Left ventricle myocardium inferior (tissue), 1 donor: ENCODE measurements at regions of chr5 and their contacts with region 1.

Region 1: DNA sequence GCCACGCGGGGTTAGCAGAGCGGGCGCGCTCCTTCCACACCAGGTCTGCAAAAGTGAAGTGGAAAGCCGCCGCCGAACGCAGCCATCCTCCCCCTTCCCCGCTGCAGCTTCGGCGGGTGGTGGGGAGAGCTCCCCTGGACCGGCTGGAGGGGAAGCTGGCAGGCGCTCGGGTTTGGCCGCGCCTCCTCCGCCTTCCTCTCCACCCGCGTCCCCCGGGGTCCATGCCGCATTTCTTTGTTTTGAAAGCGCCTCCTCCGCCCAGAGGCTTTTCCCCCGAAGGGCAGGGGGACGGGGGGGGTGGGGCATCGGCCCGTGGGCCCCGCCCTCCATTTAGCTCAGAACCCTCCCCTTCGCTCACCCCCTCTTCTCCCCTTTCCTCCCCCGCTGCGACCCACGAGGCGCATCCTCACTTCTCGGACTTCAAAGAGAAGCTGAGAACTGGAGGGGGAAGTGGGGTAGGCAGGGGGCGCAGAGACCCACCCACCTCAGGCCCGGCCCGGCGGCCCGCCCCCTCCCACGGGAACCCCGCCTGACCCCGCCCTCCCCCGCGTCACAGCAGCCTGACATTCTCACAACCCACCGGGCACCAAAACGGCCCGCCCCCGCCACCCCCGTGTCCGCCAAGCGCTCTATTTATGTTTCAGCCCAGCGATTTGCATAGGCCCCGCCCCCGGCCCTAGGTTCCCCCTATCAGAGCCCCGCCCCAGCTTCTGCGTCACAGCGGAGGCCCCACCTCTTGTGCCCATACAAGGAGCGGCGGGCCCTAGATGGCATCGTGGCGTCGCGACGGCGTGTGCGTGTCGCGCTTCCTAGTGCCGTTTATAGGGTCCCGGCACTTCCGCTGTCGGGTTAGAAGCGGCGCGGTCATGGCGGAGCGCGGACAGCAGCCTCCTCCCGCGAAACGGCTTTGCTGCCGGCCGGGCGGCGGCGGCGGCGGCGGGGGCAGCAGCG is at the start of gene ZSWIM6:
- DNase-seq: peak; percentile 100
- H3K4me3 ChIP-seq: peak within 1 kb of the TSS; percentile 98
- H3K27ac ChIP-seq: peak within 1 kb of the TSS; percentile 96
- H3K4me1 ChIP-seq: peaks cover 54% of the 10 kb centered on the region
- H3K27me3 ChIP-seq: no peaks in the 10 kb centered on the region
- CTCF ChIP-seq: no peak
- total RNA-seq, gene ZSWIM6: 5.7 TPM

Region 2: DNA sequence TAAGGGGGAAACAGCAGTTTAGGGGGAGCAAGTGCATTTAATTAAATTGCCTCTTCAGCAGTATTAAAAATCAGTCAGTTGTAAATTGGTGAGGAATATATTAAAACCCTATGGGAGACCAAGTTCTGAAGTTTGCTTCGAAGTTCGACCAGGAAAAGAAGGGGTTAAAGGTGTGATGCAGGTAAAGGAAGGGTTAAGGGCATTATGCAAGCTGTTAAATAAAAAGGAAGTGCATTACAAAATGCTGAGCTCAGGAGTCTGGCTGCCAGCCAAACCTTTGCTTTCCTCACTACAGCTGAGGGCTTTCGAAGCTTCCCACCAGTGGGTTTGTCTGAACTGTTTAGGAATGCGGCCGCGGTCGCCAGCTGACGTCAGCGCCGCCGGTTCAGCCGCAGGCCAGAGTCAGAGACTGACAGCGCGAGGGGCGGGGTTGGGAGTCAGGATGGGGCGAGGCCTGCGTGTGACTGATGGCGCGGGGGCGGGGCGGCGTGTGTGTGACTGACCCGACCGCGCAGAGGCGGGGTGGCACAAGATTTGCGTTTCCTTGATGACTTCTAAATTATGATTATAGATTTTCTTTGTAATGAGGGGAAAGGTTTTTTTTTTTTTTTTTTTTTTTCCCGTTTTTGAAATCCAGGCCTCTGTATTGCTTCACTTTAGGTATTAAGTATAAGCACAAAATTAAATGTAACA is 76.9 kb after region 1 on chr5:
- intact Hi-C with region 1: loop called (anchors 10 kb)
- DNase-seq: peak; percentile 100
- H3K4me3 ChIP-seq: peak overlapping the region; percentile 49
- H3K27ac ChIP-seq: peak overlapping the region; percentile 53
- H3K4me1 ChIP-seq: peaks cover 27% of the 10 kb centered on the region
- H3K27me3 ChIP-seq: no peaks in the 10 kb centered on the region
- CTCF ChIP-seq: no peak

Region 3: GRCh38 chr5:61658592-61659008 is 326.9 kb after region 1 on chr5:
- intact Hi-C with region 1: loop called (anchors 5 kb)
- DNase-seq: peak; percentile 82
- H3K4me3 ChIP-seq: peak overlapping the region; percentile 48
- H3K27ac ChIP-seq: peak overlapping the region; percentile 72
- H3K4me1 ChIP-seq: peaks cover 10% of the 10 kb centered on the region
- H3K27me3 ChIP-seq: no peaks in the 10 kb centered on the region
- CTCF ChIP-seq: peak; percentile 94